ENCODE measurements at regions of chr1 and their contacts with region 1.

Region 1: GRCh38 chr1:181142096-181142958 is 53.8 kb downstream of the IER5 start:
- DNase-seq: peak; percentile 88
- H3K4me3 ChIP-seq: peak overlapping the region in 1 of 2 experiments; percentile 28; a peak in 1 of 4 replicates
- H3K27ac ChIP-seq: peak overlapping the region in 1 of 2 experiments; percentile 61; a peak in 2 of 4 replicates
- H3K4me1 ChIP-seq: peaks cover 4 to 29% of the 10 kb centered on the region in 2 experiments; a peak in 3 of 4 replicates
- H3K27me3 ChIP-seq: no peaks in the 10 kb centered on the region
- CTCF ChIP-seq: peak; percentile 99
- EP300 ChIP-seq: no peak
- RAD21 ChIP-seq: peak; percentile 98

Region 2: DNA sequence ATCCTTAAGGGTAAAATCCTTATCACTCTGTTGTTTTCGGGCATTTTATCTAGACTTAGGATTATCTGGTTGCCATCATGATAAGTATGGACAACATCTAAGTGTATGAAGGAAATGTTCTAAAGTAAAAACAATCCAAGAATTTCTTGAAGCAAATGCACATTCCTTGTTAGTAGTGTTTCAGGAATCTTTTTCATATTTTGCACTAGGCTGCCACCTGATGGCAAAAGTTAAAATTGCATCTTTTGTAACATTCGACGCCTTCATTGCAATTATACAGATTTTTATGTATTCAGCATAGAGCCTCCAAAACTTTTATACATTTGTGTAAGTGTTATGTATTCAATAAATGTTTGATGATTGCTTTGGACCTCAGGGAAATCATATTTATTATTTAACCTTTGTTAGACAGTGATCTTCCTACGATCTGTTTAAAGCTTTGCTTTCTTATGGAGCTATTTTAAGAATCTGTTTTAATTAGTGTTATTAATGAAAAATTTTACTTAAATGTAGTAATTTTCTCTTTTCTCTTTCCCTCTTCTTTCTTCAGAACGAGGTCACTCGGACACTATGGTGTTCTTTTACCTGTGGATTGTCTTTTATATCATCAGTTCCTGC is 279.1 kb before region 1 on chr1:
- CTCF ChIA-PET with region 1: interaction called, 15 read pairs
- POLR2A ChIA-PET with region 1: no interaction called
- DNase-seq: peak; percentile 34
- H3K4me3 ChIP-seq: no peak overlapping the region; a peak in 1 of 4 replicates
- H3K27ac ChIP-seq: peak overlapping the region; percentile 23 to 43; a peak in 1 of 4 replicates
- H3K4me1 ChIP-seq: peaks cover 0 to 4% of the 10 kb centered on the region in 2 experiments; a peak in 1 of 4 replicates
- H3K27me3 ChIP-seq: no peaks in the 10 kb centered on the region
- CTCF ChIP-seq: peak; percentile 80
- EP300 ChIP-seq: no peak
- RAD21 ChIP-seq: peak; percentile 92

Region 3: DNA sequence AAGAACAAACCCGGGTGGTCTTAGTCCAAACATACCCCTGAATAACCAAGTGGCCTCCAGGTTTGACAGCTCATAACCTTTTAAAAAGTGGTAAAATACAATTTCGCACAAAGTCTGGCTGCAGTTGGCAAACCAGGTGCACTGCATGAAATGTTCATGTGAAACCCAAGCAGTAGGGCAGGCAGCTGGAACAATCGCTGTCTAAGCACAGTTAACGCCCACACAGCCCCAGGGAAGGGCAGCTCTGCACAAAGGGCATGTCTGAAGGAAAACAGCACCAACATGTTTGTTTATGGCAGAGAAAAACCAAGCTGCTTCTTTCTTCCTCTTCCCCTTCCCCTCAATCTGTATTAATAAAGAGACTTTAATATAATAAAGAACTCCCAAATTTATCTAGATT is 180.1 kb before region 1 on chr1:
- CTCF ChIA-PET with region 1: interaction called, 18 read pairs
- POLR2A ChIA-PET with region 1: no interaction called
- DNase-seq: no peak
- H3K4me3 ChIP-seq: no peak overlapping the region
- H3K27ac ChIP-seq: no peak overlapping the region
- H3K4me1 ChIP-seq: peaks cover 0 to 6% of the 10 kb centered on the region in 2 experiments; a peak in 1 of 4 replicates
- H3K27me3 ChIP-seq: no peaks in the 10 kb centered on the region
- CTCF ChIP-seq: no peak
- EP300 ChIP-seq: no peak
- RAD21 ChIP-seq: no peak

Region 4: DNA sequence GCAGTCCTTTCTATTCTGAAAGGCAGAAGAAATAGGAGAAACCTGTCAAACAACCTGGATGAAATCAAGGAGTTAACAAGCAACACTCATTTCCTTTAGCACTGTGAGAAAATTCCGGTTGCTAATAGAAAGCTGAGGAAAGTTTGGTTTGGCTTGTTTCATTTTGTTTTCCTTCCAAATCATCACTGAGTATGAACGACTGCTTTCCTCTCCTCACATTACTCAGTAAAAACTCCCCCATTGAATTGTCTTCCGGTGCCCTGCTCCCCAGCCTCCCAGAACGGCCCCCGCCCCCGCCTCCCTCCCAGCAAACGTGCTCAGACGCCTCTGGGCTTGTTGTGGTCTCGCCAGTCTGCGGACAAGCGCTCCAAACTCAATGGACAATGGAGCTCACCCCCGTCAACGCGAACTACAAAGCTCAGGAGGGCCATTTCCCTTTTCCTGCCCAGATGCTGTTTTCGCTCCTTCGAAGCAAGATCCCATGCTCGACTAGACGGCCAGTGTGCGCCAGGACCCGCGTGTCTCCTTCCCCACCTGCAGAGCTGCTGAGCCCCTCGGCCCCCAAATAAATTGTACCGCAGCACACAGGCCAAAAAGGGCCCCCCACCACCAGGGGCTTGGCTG is 120.4 kb before region 1 on chr1:
- CTCF ChIA-PET with region 1: interaction called, 35 read pairs
- POLR2A ChIA-PET with region 1: interaction called, 5 read pairs
- DNase-seq: peak; percentile 70
- H3K4me3 ChIP-seq: peak overlapping the region; percentile 92 to 98
- H3K27ac ChIP-seq: peak overlapping the region; percentile 55 to 72
- H3K4me1 ChIP-seq: peaks cover 9 to 10% of the 10 kb centered on the region in 2 experiments; a peak in 3 of 4 replicates
- H3K27me3 ChIP-seq: no peaks in the 10 kb centered on the region
- CTCF ChIP-seq: no peak
- EP300 ChIP-seq: no peak
- RAD21 ChIP-seq: no peak; the same call in 1 of the 2 replicates

Region 5: DNA sequence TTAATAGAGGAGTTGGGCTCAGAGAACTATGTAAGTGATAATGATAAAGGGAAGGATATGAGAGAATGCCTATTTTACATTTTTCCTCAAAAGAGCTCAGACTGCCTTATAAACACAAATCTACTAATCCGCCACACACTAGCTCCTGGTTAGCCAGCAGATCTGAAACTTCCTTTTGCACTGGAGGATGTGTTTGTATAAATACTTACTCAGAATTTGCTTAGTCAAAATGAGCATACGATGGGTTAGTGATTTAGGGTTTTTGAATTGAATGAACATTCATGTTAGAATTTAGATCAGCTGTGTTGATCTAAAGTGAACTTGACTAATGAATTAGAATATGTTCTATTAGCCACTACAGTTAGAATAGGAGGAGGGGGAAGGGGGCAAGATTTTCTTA is 62.9 kb before region 1 on chr1:
- CTCF ChIA-PET with region 1: interaction called, 38 read pairs
- POLR2A ChIA-PET with region 1: no interaction called
- DNase-seq: no peak
- H3K4me3 ChIP-seq: no peak overlapping the region
- H3K27ac ChIP-seq: peak overlapping the region in 1 of 2 experiments; percentile 78; a peak in 2 of 4 replicates
- H3K4me1 ChIP-seq: peaks cover 10 to 16% of the 10 kb centered on the region in 2 experiments; a peak in 3 of 4 replicates
- H3K27me3 ChIP-seq: no peaks in the 10 kb centered on the region
- CTCF ChIP-seq: no peak
- EP300 ChIP-seq: no peak
- RAD21 ChIP-seq: no peak

Region 6: DNA sequence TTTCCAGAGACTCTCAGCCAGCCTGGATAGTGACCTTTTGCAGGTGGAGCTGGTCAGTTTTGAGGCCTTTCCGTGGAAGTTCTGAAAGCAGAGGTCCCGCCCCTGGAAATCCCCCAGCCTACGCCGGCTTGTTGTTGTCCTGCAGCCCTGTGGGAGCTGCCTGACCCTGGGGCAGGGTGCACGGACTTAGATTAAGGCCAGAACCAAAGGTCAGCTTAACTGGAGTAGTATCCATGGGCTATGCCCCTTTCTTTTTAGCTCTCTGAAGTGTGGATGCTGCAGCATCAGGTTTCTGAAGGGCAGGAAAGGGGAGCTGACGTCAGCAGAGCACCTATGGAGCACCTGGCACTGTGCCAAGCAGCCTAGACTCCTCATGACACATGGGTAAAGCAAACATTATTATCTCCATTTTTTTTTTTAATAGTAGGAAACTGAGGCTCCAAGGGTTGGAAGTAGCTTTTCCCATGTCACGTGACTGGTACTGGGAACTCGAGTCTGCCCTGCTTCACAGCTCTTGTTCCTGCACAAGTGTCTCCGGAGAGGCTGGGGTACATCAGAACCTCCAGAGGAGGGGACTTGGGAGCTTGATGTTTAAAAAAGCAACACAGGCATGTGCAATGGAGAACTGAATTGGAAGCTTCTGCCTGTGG is 15.3 kb before region 1 on chr1:
- CTCF ChIA-PET with region 1: interaction called, 29 read pairs
- POLR2A ChIA-PET with region 1: no interaction called
- DNase-seq: peak; percentile 38
- H3K4me3 ChIP-seq: no peak overlapping the region
- H3K27ac ChIP-seq: no peak overlapping the region
- H3K4me1 ChIP-seq: peaks cover 8 to 20% of the 10 kb centered on the region in 2 experiments; a peak in 2 of 4 replicates
- H3K27me3 ChIP-seq: no peaks in the 10 kb centered on the region
- CTCF ChIP-seq: no peak
- EP300 ChIP-seq: no peak
- RAD21 ChIP-seq: no peak

Region 7: DNA sequence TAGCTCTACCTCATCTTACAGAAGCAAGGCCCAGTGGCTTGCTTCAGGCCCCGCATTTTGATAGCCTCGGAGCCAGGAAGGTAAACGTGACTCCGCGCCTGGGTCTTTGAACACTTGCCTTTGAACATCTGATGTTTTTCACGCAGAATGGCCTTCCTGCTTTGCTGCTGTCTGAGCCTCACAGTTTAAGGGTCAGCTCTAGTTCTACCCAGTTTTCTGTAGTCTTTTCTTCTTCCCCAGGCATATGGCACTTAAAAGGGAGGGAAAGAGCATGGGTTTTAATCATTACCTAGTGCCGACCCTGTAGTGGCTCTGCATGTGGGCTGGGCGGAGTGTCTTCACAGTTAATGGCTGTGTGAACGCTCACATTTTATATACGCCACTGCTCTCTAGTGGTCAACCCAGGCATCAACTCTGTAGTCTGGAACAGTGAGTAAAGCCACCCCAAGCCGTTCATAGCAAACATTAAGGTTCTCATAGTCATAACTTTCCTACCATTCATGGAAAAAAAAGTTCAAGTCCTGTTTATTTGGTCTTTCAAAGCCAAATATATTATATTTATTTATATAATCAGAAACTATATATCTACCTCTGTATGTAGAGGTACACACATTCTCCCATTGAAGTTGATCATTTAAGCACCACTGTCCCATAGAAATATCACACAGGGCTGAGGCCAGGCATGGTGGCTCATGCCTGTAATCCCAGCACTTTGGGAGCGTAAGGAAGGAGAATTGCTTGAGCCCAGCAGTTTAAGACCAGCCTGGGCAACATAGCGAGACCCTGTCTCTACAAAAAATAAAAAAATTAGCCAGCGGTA is 24.3 kb after region 1 on chr1:
- CTCF ChIA-PET with region 1: interaction called, 40 read pairs
- POLR2A ChIA-PET with region 1: no interaction called
- DNase-seq: peak; percentile 78
- H3K4me3 ChIP-seq: no peak overlapping the region; a peak in 1 of 4 replicates
- H3K27ac ChIP-seq: no peak overlapping the region
- H3K4me1 ChIP-seq: peaks cover 0 to 2% of the 10 kb centered on the region in 2 experiments; a peak in 1 of 4 replicates
- H3K27me3 ChIP-seq: no peaks in the 10 kb centered on the region; the same call in 1 of the 2 replicates
- CTCF ChIP-seq: peak; percentile 85
- EP300 ChIP-seq: no peak
- RAD21 ChIP-seq: peak; percentile 98

Region 8: DNA sequence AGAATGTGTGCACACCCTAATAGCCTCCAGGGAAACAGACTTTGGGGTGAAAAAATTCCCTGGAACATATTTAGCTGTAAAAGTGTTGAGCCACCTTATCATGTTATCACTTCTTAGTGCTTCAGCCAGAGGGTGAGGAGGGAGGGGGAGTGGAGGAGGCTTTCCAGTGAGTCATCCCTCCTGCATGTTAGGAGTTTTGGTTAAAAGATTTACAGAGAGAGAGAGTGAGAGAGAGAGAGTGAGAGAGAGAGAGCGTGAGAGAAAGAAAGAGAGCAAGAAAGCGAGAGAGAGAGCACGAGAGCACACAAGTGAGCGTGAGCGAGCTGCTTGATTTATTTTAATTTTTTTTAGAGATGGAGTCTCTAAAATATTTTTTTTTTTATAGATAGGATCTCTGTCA is 327.5 kb after region 1 on chr1:
- CTCF ChIA-PET with region 1: no interaction called
- POLR2A ChIA-PET with region 1: no interaction called
- DNase-seq: no peak
- H3K4me3 ChIP-seq: no peak overlapping the region
- H3K27ac ChIP-seq: no peak overlapping the region
- H3K4me1 ChIP-seq: no peaks in the 10 kb centered on the region
- H3K27me3 ChIP-seq: no peaks in the 10 kb centered on the region
- CTCF ChIP-seq: no peak
- EP300 ChIP-seq: no peak
- RAD21 ChIP-seq: no peak

Measured in SK-N-SH (cell line).